Naive thymus-derived CD4-positive, alpha-beta T cell (primary cell): ENCODE measurements at regions of chr16 and their contacts with region 1.

Region 1: GRCh38 chr16:1918312-1918889 is at the start of gene HS3ST6:
- DNase-seq: no peak
- ATAC-seq: no peak
- H3K4me3 ChIP-seq: no peak within 1 kb of the TSS
- H3K4me3 Mint-ChIP-seq: peak within 1 kb of the TSS in 1 of 10 donors; percentile 53
- H3K27ac ChIP-seq: no peak within 1 kb of the TSS
- H3K27ac Mint-ChIP-seq: no peak within 1 kb of the TSS
- H3K4me1 ChIP-seq: no peaks in the 10 kb centered on the region
- H3K4me1 Mint-ChIP-seq: peaks cover 0 to 10% (median 5%) of the 10 kb centered on the region in 7 donors
- H3K27me3 ChIP-seq: peaks cover 2 to 4% of the 10 kb centered on the region in 2 donors
- H3K27me3 Mint-ChIP-seq: peaks cover 42 to 69% (median 59%) of the 10 kb centered on the region in 5 donors
- total RNA-seq, gene HS3ST6: not detected

Region 2: GRCh38 chr16:1876468-1876867 is 41.9 kb before region 1 on chr16:
- CTCF ChIA-PET with region 1: no interaction called
- POLR2A ChIA-PET with region 1: no interaction called
- intact Hi-C with region 1: loop called in 1 of 2 experiments (anchors 5 kb)
- DNase-seq: no peak
- ATAC-seq: no peak
- H3K4me3 ChIP-seq: no peak overlapping the region
- H3K4me3 Mint-ChIP-seq: no peak overlapping the region
- H3K27ac ChIP-seq: no peak overlapping the region
- H3K27ac Mint-ChIP-seq: no peak overlapping the region
- H3K4me1 ChIP-seq: no peaks in the 10 kb centered on the region
- H3K4me1 Mint-ChIP-seq: peaks cover 0 to 6% (median 5%) of the 10 kb centered on the region in 7 donors
- H3K27me3 ChIP-seq: no peaks in the 10 kb centered on the region
- H3K27me3 Mint-ChIP-seq: peaks cover 26 to 40% (median 35%) of the 10 kb centered on the region in 5 donors